ENCODE measurements at regions of chr6 and their contacts with region 1.

Region 1: GRCh38 chr6:153023977-153024708 is 21.6 kb upstream of the MTRF1L start:
- DNase-seq: peak; percentile 25 to 78
- H3K4me3 ChIP-seq: no peak overlapping the region
- H3K27ac ChIP-seq: no peak overlapping the region
- H3K4me1 ChIP-seq: peaks cover 0 to 7% (median 0%) of the 10 kb centered on the region in 4 donors
- H3K27me3 ChIP-seq: no peaks in the 10 kb centered on the region
- CTCF ChIP-seq: peak in 5 of 7 experiments; percentile 51 to 83 (median 62)
- EP300 ChIP-seq: no peak
- POLR2A ChIP-seq: no peak

Region 2: GRCh38 chr6:152863618-152864326 is 160.4 kb before region 1 on chr6:
- intact Hi-C with region 1: loop called (anchors 10 kb)
- DNase-seq: peak; percentile 63 to 85
- H3K4me3 ChIP-seq: no peak overlapping the region
- H3K27ac ChIP-seq: no peak overlapping the region
- H3K4me1 ChIP-seq: no peaks in the 10 kb centered on the region
- H3K27me3 ChIP-seq: no peaks in the 10 kb centered on the region
- CTCF ChIP-seq: peak in 5 of 7 experiments; percentile 22 to 66 (median 39)
- EP300 ChIP-seq: no peak
- POLR2A ChIP-seq: no peak

Measured in stomach (tissue), 19 donors.